CD4-positive, alpha-beta T cell (primary cell): ENCODE measurements at regions of chr6 and their contacts with region 1.

Region 1: DNA sequence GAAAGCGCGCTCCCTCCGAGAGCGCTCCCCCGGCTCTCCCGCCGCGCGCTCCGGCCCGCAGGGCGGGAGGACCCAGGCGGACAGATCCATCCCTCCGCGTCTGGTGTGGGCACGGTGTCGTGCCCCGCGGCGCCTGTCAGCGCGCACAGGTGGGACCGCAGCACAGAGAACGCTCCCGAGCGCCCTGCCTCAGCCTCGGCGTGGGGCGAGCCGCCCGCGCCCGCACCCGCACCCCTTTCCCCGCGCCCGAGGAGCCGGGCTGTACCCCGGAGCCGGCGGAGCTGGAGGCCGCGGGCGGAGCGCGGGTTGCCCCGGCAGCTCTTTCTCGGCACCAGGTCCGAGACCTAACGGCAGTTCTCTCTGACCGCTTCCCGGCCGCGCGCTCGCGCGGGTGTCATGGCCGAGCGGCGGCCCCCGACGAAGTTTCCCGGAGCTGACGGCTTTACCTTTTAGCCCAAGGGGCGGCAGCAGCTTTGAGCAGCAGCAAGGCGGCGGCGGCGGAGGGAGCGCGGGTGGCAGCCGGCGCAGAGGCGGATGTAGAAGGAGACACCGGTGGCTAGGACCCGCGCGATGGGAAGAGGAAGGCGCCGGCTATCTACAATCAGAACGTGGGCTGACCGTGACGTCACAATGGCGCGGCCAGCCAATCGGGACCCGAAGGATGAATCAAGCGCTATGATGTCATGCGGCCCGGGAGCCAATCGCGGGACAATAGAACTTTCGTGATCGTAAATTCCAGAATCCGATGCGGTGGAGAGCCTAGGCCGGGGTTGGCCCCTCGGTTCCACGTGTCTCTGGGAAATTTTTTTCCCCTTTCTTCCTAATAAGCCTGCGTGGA is at the start of gene ELOVL5:
- DNase-seq: peak; percentile 82 to 99 (median 92)
- ATAC-seq: peak; percentile 74
- H3K4me3 ChIP-seq: peak within 1 kb of the TSS; percentile 91
- H3K4me3 Mint-ChIP-seq: peak within 1 kb of the TSS; percentile 98
- H3K27ac ChIP-seq: peak within 1 kb of the TSS; percentile 91 to 92
- H3K27ac Mint-ChIP-seq: peak within 1 kb of the TSS; percentile 94
- H3K4me1 ChIP-seq: peaks cover 29% of the 10 kb centered on the region
- H3K4me1 Mint-ChIP-seq: peaks cover 51% of the 10 kb centered on the region
- H3K27me3 ChIP-seq: no peaks in the 10 kb centered on the region
- H3K27me3 Mint-ChIP-seq: no peaks in the 10 kb centered on the region
- CTCF ChIP-seq: no peak
- total RNA-seq, gene ELOVL5: 78.0 to 86.8 TPM

Region 2: GRCh38 chr6:53171605-53172446 is 176.8 kb before region 1 on chr6:
- CTCF ChIA-PET with region 1: no interaction called
- POLR2A ChIA-PET with region 1: interaction called, 3 read pairs
- intact Hi-C with region 1: loop called in 1 of 2 experiments (anchors 2 kb)
- DNase-seq: peak; percentile 82 to 95 (median 92)
- ATAC-seq: peak; percentile 100
- H3K4me3 ChIP-seq: no peak overlapping the region
- H3K4me3 Mint-ChIP-seq: no peak overlapping the region
- H3K27ac ChIP-seq: no peak overlapping the region
- H3K27ac Mint-ChIP-seq: no peak overlapping the region
- H3K4me1 ChIP-seq: no peaks in the 10 kb centered on the region
- H3K4me1 Mint-ChIP-seq: no peaks in the 10 kb centered on the region
- H3K27me3 ChIP-seq: no peaks in the 10 kb centered on the region
- H3K27me3 Mint-ChIP-seq: no peaks in the 10 kb centered on the region
- CTCF ChIP-seq: peak; percentile 100

Region 3: GRCh38 chr6:53294095-53294494 is 54.5 kb before region 1 on chr6:
- CTCF ChIA-PET with region 1: interaction called, 6 read pairs
- POLR2A ChIA-PET with region 1: interaction called, 87 read pairs
- intact Hi-C with region 1: loop called in 1 of 2 experiments (anchors 2 kb)
- DNase-seq: peak in 3 of 14 experiments; percentile 22 to 46 (median 40)
- ATAC-seq: no peak
- H3K4me3 ChIP-seq: no peak overlapping the region
- H3K4me3 Mint-ChIP-seq: no peak overlapping the region
- H3K27ac ChIP-seq: peak overlapping the region in 1 of 2 donors; percentile 23
- H3K27ac Mint-ChIP-seq: peak overlapping the region; percentile 73
- H3K4me1 ChIP-seq: peaks cover 53% of the 10 kb centered on the region
- H3K4me1 Mint-ChIP-seq: peaks cover 89% of the 10 kb centered on the region
- H3K27me3 ChIP-seq: no peaks in the 10 kb centered on the region
- H3K27me3 Mint-ChIP-seq: no peaks in the 10 kb centered on the region
- CTCF ChIP-seq: peak; percentile 33

Region 4: DNA sequence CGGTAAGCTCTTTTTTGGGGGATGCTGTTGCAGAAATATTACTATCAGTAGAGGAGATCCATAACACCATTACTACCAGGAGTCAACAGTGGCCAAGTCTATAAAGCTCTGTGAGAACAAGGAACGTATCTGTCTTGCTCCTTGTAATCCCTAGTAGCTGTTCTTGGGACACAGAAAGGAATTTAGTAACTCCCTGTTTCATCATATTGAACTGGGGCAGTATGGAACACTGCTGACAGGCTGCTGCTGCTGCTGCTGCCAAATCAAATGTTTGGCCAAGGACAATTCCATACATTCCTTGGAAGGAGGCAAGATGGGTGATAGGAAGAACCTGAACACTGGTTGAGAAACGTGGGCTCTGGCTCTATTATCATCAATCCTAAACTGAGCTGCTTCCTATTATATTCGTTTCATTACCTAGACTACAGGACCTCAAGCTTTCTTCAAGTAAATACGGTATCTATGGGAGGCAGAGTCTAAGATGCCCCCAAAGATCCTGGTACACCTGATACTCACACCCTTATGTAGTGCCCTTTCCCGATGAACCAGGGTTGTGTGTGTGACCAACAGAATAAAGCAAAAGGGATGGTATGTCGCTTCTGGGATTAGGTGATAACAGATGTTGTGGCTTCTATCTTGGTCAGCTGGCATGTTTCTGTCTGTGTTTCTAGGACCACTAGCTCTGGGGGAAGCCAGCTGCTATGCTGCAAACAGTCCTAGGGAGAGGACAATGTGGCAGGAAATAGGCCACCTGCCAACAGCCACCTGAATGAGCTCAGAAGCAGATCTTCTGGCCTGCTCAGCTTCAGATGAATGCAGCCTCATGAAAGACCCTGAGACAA is 39.3 kb before region 1 on chr6:
- CTCF ChIA-PET with region 1: interaction called, 3 read pairs
- POLR2A ChIA-PET with region 1: interaction called, 63 read pairs
- intact Hi-C with region 1: loop called in 1 of 2 experiments (anchors 5 kb)
- DNase-seq: peak in 6 of 14 experiments; percentile 15 to 51 (median 42)
- ATAC-seq: peak; percentile 47
- H3K4me3 ChIP-seq: no peak overlapping the region
- H3K4me3 Mint-ChIP-seq: peak overlapping the region; percentile 44
- H3K27ac ChIP-seq: peak overlapping the region in 1 of 2 donors; percentile 41
- H3K27ac Mint-ChIP-seq: peak overlapping the region; percentile 69
- H3K4me1 ChIP-seq: peaks cover 60% of the 10 kb centered on the region
- H3K4me1 Mint-ChIP-seq: peaks cover 84% of the 10 kb centered on the region
- H3K27me3 ChIP-seq: no peaks in the 10 kb centered on the region
- H3K27me3 Mint-ChIP-seq: no peaks in the 10 kb centered on the region
- CTCF ChIP-seq: no peak

Region 5: GRCh38 chr6:53335208-53335994 is 13.2 kb before region 1 on chr6:
- CTCF ChIA-PET with region 1: interaction called, 7 read pairs
- POLR2A ChIA-PET with region 1: interaction called, 116 read pairs
- intact Hi-C with region 1: loop called in 1 of 2 experiments (anchors 1 kb)
- DNase-seq: peak; percentile 53 to 93 (median 72)
- ATAC-seq: peak; percentile 77
- H3K4me3 ChIP-seq: peak overlapping the region; percentile 60
- H3K4me3 Mint-ChIP-seq: peak overlapping the region; percentile 89
- H3K27ac ChIP-seq: peak overlapping the region; percentile 97 to 98
- H3K27ac Mint-ChIP-seq: peak overlapping the region; percentile 99
- H3K4me1 ChIP-seq: peaks cover 77% of the 10 kb centered on the region
- H3K4me1 Mint-ChIP-seq: peaks cover 94% of the 10 kb centered on the region
- H3K27me3 ChIP-seq: no peaks in the 10 kb centered on the region
- H3K27me3 Mint-ChIP-seq: no peaks in the 10 kb centered on the region
- CTCF ChIP-seq: no peak

Region 6: GRCh38 chr6:53410508-53411258 is 62.1 kb after region 1 on chr6:
- CTCF ChIA-PET with region 1: interaction called, 8 read pairs
- POLR2A ChIA-PET with region 1: no interaction called
- intact Hi-C with region 1: loop called in 1 of 2 experiments (anchors 5 kb)
- DNase-seq: peak; percentile 40 to 83 (median 60)
- ATAC-seq: peak; percentile 100
- H3K4me3 ChIP-seq: no peak overlapping the region
- H3K4me3 Mint-ChIP-seq: no peak overlapping the region
- H3K27ac ChIP-seq: no peak overlapping the region
- H3K27ac Mint-ChIP-seq: no peak overlapping the region
- H3K4me1 ChIP-seq: peaks cover 3% of the 10 kb centered on the region
- H3K4me1 Mint-ChIP-seq: peaks cover 5% of the 10 kb centered on the region
- H3K27me3 ChIP-seq: no peaks in the 10 kb centered on the region
- H3K27me3 Mint-ChIP-seq: peaks cover 4% of the 10 kb centered on the region
- CTCF ChIP-seq: peak; percentile 85

Region 7: DNA sequence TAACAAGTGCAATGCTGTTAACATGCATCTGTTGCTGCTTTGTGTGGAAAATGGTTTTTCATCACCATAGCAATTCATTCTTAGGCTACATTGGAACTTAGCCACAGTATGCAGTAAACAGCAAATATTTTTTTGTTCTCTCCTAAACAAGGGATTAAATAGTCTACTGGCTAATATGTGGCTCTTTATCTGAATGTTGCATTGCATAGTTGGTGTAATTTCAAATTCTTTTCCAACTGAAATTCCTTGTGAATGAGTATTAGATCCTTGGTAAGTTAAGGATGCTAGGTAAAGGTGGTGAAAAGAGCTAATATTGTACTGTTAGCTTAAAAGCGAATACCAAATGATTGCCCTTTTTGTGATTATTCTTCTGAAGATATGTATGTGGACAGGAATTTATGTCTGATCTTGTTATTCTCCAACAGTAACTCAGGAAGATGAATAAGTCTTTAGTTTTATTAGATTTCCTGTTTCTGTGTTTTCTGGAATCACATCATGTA is 763.6 kb after region 1 on chr6:
- CTCF ChIA-PET with region 1: no interaction called
- POLR2A ChIA-PET with region 1: no interaction called
- intact Hi-C with region 1: no loop called
- DNase-seq: no peak
- ATAC-seq: no peak
- H3K4me3 ChIP-seq: no peak overlapping the region
- H3K4me3 Mint-ChIP-seq: no peak overlapping the region
- H3K27ac ChIP-seq: no peak overlapping the region
- H3K27ac Mint-ChIP-seq: no peak overlapping the region
- H3K4me1 ChIP-seq: no peaks in the 10 kb centered on the region
- H3K4me1 Mint-ChIP-seq: no peaks in the 10 kb centered on the region
- H3K27me3 ChIP-seq: no peaks in the 10 kb centered on the region
- H3K27me3 Mint-ChIP-seq: peaks cover 6% of the 10 kb centered on the region
- CTCF ChIP-seq: no peak